B cell (primary cell): ENCODE measurements at regions of chr19 and their contacts with region 1.

Region 1: GRCh38 chr19:4065430-4066175 is 1.1 kb downstream of the ZBTB7A start:
- DNase-seq: peak; percentile 98
- ATAC-seq: peak; percentile 74
- H3K4me3 ChIP-seq: peak overlapping the region in 4 of 5 experiments; percentile 82 to 90 (median 89)
- H3K4me3 Mint-ChIP-seq: peak overlapping the region; percentile 68
- H3K27ac ChIP-seq: no peak overlapping the region
- H3K27ac Mint-ChIP-seq: peak overlapping the region; percentile 77
- H3K4me1 ChIP-seq: peaks cover 54 to 63% of the 10 kb centered on the region in 2 donors
- H3K4me1 Mint-ChIP-seq: peaks cover 42% of the 10 kb centered on the region
- H3K27me3 ChIP-seq: no peaks in the 10 kb centered on the region
- H3K27me3 Mint-ChIP-seq: no peaks in the 10 kb centered on the region
- CTCF ChIP-seq: no peak

Region 2: DNA sequence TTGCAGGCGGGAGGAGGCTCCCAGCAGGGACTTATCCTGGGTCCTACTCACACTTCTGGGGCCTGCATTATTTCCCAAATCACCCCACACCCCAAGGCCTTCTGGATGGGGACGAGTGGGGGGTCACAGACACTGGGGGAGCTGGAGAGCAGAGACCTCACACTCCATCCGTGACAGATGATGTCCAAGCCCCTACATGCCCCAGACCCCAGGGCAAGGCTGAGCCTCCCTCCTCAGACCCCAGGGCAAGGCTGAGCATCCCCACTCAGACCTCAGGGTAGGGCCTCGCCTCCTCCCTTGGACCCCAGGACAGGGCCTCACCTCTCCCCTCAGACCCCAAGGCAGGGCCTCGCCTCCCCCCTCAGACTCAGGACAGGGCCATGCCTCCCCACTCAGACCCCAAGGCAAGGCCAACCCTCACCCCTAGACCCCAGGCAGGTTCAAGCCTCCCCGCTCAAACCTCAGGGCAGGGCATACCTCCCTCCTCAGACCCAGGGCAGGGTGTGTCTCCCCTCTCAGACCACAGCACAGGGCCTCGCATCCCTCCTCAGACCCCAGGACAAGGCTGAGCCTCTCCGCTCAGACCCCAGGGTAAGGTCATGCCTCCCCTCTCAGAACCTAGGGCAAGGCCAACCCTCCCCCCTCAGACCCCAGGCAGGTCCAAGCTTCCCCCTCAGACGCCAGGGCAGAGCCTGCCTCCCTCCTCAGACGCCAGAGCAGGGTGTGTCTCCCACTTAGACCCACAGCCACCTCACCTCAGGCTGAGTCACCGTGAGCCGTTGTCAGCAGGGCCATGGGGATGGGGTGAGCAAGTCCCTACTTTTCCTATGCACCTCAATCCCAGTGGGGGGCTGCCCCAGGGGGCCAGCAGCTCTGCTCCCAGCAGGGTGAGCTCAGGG is 888.8 kb before region 1 on chr19:
- CTCF ChIA-PET with region 1: no interaction called
- POLR2A ChIA-PET with region 1: no interaction called
- intact Hi-C with region 1: loop called (anchors 10 kb)
- DNase-seq: peak; percentile 60
- ATAC-seq: no peak
- H3K4me3 ChIP-seq: no peak overlapping the region
- H3K4me3 Mint-ChIP-seq: peak overlapping the region; percentile 67
- H3K27ac ChIP-seq: peak overlapping the region; percentile 91
- H3K27ac Mint-ChIP-seq: peak overlapping the region; percentile 92
- H3K4me1 ChIP-seq: peaks cover 34 to 50% of the 10 kb centered on the region in 2 donors
- H3K4me1 Mint-ChIP-seq: peaks cover 38% of the 10 kb centered on the region
- H3K27me3 ChIP-seq: no peaks in the 10 kb centered on the region
- H3K27me3 Mint-ChIP-seq: no peaks in the 10 kb centered on the region
- CTCF ChIP-seq: no peak

Region 3: GRCh38 chr19:4007021-4007835 is 58.4 kb before region 1 on chr19 and contains the start of gene PIAS4:
- CTCF ChIA-PET with region 1: interaction called, 3 read pairs
- POLR2A ChIA-PET with region 1: interaction called, 8 read pairs
- intact Hi-C with region 1: loop called (anchors 1 kb)
- DNase-seq: peak; percentile 98
- ATAC-seq: peak; percentile 86
- H3K4me3 ChIP-seq: peak within 1 kb of the TSS; percentile 27 to 84 (median 74)
- H3K4me3 Mint-ChIP-seq: peak within 1 kb of the TSS; percentile 93
- H3K27ac ChIP-seq: peak within 1 kb of the TSS; percentile 55 to 71
- H3K27ac Mint-ChIP-seq: peak within 1 kb of the TSS; percentile 92
- H3K4me1 ChIP-seq: peaks cover 14 to 35% of the 10 kb centered on the region in 2 donors
- H3K4me1 Mint-ChIP-seq: peaks cover 33% of the 10 kb centered on the region
- H3K27me3 ChIP-seq: no peaks in the 10 kb centered on the region
- H3K27me3 Mint-ChIP-seq: no peaks in the 10 kb centered on the region
- CTCF ChIP-seq: no peak
- total RNA-seq, gene PIAS4: 56.8 and 57.2 TPM in 2 replicates

Region 4: GRCh38 chr19:4077882-4078614 is 12.4 kb after region 1 on chr19:
- CTCF ChIA-PET with region 1: no interaction called
- POLR2A ChIA-PET with region 1: interaction called, 16 read pairs
- intact Hi-C with region 1: loop called (anchors 1 kb)
- DNase-seq: peak; percentile 70
- ATAC-seq: peak; percentile 80
- H3K4me3 ChIP-seq: peak overlapping the region; percentile 44 to 66 (median 63)
- H3K4me3 Mint-ChIP-seq: peak overlapping the region; percentile 93
- H3K27ac ChIP-seq: peak overlapping the region; percentile 35 to 86
- H3K27ac Mint-ChIP-seq: peak overlapping the region; percentile 95
- H3K4me1 ChIP-seq: peaks cover 14 to 21% of the 10 kb centered on the region in 2 donors
- H3K4me1 Mint-ChIP-seq: peaks cover 10% of the 10 kb centered on the region
- H3K27me3 ChIP-seq: no peaks in the 10 kb centered on the region
- H3K27me3 Mint-ChIP-seq: no peaks in the 10 kb centered on the region
- CTCF ChIP-seq: no peak

Region 5: GRCh38 chr19:4108767-4109625 is 43.4 kb after region 1 on chr19:
- CTCF ChIA-PET with region 1: no interaction called
- POLR2A ChIA-PET with region 1: interaction called, 27 read pairs
- intact Hi-C with region 1: loop called (anchors 1 kb)
- DNase-seq: peak; percentile 93
- ATAC-seq: peak; percentile 87
- H3K4me3 ChIP-seq: peak overlapping the region in 4 of 5 experiments; percentile 34 to 49 (median 40)
- H3K4me3 Mint-ChIP-seq: peak overlapping the region; percentile 88
- H3K27ac ChIP-seq: peak overlapping the region; percentile 82 to 85
- H3K27ac Mint-ChIP-seq: peak overlapping the region; percentile 100
- H3K4me1 ChIP-seq: peaks cover 36 to 55% of the 10 kb centered on the region in 2 donors
- H3K4me1 Mint-ChIP-seq: peaks cover 53% of the 10 kb centered on the region
- H3K27me3 ChIP-seq: no peaks in the 10 kb centered on the region
- H3K27me3 Mint-ChIP-seq: no peaks in the 10 kb centered on the region
- CTCF ChIP-seq: no peak

Region 6: DNA sequence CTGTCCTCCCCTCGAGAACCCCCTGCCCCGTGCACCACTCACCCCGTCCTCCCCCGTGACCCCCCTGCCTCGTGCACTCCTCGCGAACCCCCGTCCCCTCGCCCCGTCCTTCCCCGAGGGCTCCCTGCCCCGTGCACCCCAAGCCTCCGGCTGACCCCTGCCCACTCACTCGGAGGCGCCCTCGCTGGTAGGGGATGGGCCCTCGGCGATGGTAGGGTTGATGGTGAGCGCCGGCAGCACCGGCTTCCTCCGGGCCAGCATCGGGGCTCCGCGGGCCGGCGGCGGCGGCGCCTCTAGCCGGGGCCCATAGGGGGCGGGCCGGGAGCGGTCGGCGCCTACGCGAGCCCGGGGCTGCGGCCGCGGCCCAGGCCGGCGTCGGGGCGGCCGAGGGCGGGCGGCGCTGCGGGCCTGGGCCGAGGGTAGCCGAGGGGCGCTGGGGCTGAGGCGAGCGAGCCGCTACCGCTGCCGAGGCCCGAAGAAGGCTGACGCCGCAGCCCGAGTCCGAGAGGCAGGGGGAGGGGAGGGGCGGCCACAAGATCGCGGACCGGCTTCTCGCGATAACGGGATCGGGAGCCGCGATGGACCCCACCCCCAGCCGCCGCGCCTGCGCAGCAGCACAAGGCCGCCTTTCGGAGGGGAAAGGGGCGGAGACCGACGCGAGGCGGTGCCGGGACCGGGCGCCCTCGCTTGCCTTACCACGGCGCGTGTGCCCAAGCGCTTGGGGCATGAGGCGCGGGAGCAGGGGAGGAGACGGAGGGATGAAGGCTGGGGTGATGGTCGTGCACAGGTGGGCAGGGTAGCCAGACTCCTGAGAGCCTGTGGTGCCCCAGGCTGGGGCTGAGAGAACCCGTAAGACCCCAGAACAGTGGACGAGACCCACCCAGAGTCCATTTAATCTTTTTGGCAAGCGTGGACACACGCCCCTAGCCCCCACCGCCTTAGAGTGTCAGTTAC is 58.3 kb after region 1 on chr19 and contains the start of gene MAP2K2:
- CTCF ChIA-PET with region 1: no interaction called
- POLR2A ChIA-PET with region 1: no interaction called
- intact Hi-C with region 1: loop called (anchors 1 kb)
- DNase-seq: peak; percentile 97
- ATAC-seq: peak; percentile 96
- H3K4me3 ChIP-seq: peak within 1 kb of the TSS; percentile 51 to 81 (median 62)
- H3K4me3 Mint-ChIP-seq: peak within 1 kb of the TSS; percentile 87
- H3K27ac ChIP-seq: peak within 1 kb of the TSS; percentile 56 to 85
- H3K27ac Mint-ChIP-seq: peak within 1 kb of the TSS; percentile 90
- H3K4me1 ChIP-seq: peaks cover 16 to 18% of the 10 kb centered on the region in 2 donors
- H3K4me1 Mint-ChIP-seq: peaks cover 20% of the 10 kb centered on the region
- H3K27me3 ChIP-seq: no peaks in the 10 kb centered on the region
- H3K27me3 Mint-ChIP-seq: no peaks in the 10 kb centered on the region
- CTCF ChIP-seq: no peak
- total RNA-seq, gene MAP2K2: 137 and 138 TPM in 2 replicates

Region 7: DNA sequence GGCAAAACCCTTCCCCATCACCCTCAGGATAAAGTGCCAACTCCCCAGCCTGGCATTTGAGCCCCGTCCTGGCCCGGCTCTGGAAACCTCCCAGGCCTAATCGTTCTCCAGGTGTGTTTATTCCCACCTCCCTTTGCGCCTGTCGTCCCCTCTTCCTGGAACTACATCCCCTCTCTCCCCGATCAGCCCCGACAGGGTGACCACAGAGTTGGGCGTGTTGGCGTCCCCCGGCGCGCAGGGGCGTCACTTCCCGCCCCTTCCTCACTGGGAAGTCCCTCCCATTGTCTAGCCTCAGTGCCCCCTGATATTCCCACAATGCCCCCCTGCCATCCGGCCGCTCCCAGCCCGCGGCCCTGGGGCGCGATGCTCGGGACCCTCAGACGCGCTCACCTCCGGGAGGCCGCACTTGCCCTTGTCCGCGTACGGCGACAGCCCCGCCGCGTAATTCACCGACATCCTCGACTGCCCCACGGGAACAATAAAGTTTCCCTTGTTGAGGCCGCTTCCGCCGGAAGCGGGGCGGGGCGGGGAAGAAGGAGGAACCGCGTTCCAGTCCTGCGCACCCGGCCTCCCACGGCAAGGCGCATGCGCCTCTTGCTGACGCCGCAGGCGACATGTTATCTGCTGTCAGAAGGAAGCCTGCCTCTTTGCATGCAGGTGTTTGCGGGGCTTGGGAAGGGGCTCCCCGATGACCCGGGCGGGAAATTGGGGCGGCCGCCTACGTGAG is 116.6 kb after region 1 on chr19 and contains the starts of genes ANKRD24 and SIRT6:
- CTCF ChIA-PET with region 1: no interaction called
- POLR2A ChIA-PET with region 1: no interaction called
- intact Hi-C with region 1: loop called (anchors 5 kb)
- DNase-seq: peak; percentile 97
- ATAC-seq: peak; percentile 83
- H3K4me3 ChIP-seq: peak within 1 kb of the TSS; percentile 65 to 91 (median 85)
- H3K4me3 Mint-ChIP-seq: peak within 1 kb of the TSS; percentile 99
- H3K27ac ChIP-seq: peak within 1 kb of the TSS; percentile 72 to 95
- H3K27ac Mint-ChIP-seq: peak within 1 kb of the TSS; percentile 98
- H3K4me1 ChIP-seq: peaks cover 20 to 32% of the 10 kb centered on the region in 2 donors
- H3K4me1 Mint-ChIP-seq: peaks cover 37% of the 10 kb centered on the region
- H3K27me3 ChIP-seq: no peaks in the 10 kb centered on the region
- H3K27me3 Mint-ChIP-seq: peaks cover 6% of the 10 kb centered on the region
- CTCF ChIP-seq: no peak
- total RNA-seq, gene ANKRD24: 0.37 and 1.4 TPM in 2 replicates
- total RNA-seq, gene SIRT6: 27.8 and 30.4 TPM in 2 replicates